Endothelial cell of umbilical vein (primary cell): ENCODE measurements at regions of chr15 and their contacts with region 1.

Region 1: GRCh38 chr15:35444557-35445204 is 101.3 kb downstream of the DPH6 start:
- DNase-seq: peak; percentile 72
- H3K4me3 ChIP-seq: no peak overlapping the region
- H3K27ac ChIP-seq: no peak overlapping the region
- H3K4me1 ChIP-seq: peaks cover 4% of the 10 kb centered on the region
- H3K27me3 ChIP-seq: peaks cover 0 to 2% of the 10 kb centered on the region in 2 experiments
- CTCF ChIP-seq: peak; percentile 59 to 68
- POLR2A ChIP-seq: no peak

Region 2: DNA sequence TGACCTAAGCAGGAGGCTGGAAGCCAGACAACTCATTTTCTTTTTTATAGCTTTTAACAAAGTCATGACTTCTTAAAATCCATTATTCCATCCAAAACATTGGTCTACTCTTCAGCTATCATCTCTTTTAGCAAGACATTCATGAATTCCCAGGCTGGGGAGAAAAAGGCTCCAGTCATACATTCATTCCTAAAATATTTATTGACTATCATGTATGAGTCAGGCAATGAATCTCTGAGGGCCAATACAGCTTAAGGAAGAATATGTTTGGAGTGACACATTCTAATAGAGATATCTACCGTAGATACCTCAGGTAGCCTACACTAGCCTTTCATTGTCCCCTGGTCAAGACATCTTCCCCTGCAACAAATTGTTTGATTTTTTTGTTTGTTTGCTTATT is 163.2 kb before region 1 on chr15:
- CTCF ChIA-PET with region 1: interaction called, 44 read pairs
- POLR2A ChIA-PET with region 1: no interaction called
- dilution Hi-C with region 1: no loop called
- intact Hi-C with region 1: no loop called
- DNase-seq: no peak
- H3K4me3 ChIP-seq: no peak overlapping the region
- H3K27ac ChIP-seq: no peak overlapping the region
- H3K4me1 ChIP-seq: no peaks in the 10 kb centered on the region
- H3K27me3 ChIP-seq: peaks cover 2 to 5% of the 10 kb centered on the region in 2 experiments
- CTCF ChIP-seq: no peak
- POLR2A ChIP-seq: no peak

Region 3: DNA sequence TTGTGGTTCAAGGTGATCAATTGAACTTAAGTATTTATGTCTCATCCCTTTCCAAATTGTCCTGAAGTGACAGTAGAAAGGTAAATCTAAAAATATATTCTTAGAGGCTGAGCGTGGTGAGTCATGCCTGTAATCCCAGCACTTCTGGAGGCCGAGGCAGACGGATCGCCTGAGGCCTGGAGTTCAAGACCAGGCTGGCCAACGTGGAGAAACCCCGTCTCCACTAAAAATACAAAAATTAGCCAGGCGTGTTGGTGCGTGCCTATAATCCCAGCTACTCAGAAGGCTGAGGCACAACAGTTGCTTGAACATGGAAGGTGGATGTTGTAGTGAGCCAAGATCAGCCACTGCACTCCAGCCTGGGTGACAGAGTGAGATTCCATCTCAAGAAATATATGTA is 125.3 kb before region 1 on chr15:
- CTCF ChIA-PET with region 1: interaction called, 17 read pairs
- POLR2A ChIA-PET with region 1: no interaction called
- dilution Hi-C with region 1: no loop called
- intact Hi-C with region 1: no loop called
- DNase-seq: no peak
- H3K4me3 ChIP-seq: no peak overlapping the region
- H3K27ac ChIP-seq: no peak overlapping the region
- H3K4me1 ChIP-seq: no peaks in the 10 kb centered on the region
- H3K27me3 ChIP-seq: no peaks in the 10 kb centered on the region
- CTCF ChIP-seq: no peak
- POLR2A ChIP-seq: no peak

Region 4: DNA sequence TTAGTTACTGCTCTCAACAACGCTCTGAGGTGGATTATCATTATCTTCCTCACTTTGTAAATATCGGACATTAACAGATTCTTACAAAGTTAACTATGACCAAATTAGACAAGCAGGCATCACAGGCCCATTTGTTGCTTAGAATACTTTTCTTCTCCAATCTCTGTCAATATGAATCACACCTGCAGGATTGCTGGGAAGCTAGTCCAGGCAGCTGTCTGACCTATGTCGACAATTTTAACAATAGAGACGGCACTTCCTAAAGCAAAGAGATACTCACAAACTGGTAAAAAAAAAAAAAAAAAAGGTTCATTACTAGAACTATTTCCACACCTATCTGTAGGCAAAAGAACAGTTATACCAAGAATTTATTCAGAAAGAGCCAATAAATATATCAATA is 15.9 kb after region 1 on chr15:
- CTCF ChIA-PET with region 1: interaction called, 16 read pairs
- POLR2A ChIA-PET with region 1: no interaction called
- dilution Hi-C with region 1: no loop called
- intact Hi-C with region 1: no loop called
- DNase-seq: no peak
- H3K4me3 ChIP-seq: no peak overlapping the region
- H3K27ac ChIP-seq: no peak overlapping the region
- H3K4me1 ChIP-seq: peaks cover 11% of the 10 kb centered on the region
- H3K27me3 ChIP-seq: no peaks in the 10 kb centered on the region
- CTCF ChIP-seq: no peak
- POLR2A ChIP-seq: no peak

Region 5: GRCh38 chr15:35751413-35752133 is 306.9 kb after region 1 on chr15:
- CTCF ChIA-PET with region 1: interaction called, 12 read pairs
- POLR2A ChIA-PET with region 1: no interaction called
- dilution Hi-C with region 1: no loop called
- intact Hi-C with region 1: no loop called
- DNase-seq: peak; percentile 85
- H3K4me3 ChIP-seq: no peak overlapping the region
- H3K27ac ChIP-seq: no peak overlapping the region
- H3K4me1 ChIP-seq: peaks cover 3% of the 10 kb centered on the region
- H3K27me3 ChIP-seq: no peaks in the 10 kb centered on the region
- CTCF ChIP-seq: peak; percentile 73 to 77
- POLR2A ChIP-seq: no peak